Activated naive CD4-positive, alpha-beta T cell treated with anti-CD3 and anti-CD28 coated beads for 36 hours (primary cell): ENCODE measurements at regions of chr2 and their contacts with region 1.

Region 1: DNA sequence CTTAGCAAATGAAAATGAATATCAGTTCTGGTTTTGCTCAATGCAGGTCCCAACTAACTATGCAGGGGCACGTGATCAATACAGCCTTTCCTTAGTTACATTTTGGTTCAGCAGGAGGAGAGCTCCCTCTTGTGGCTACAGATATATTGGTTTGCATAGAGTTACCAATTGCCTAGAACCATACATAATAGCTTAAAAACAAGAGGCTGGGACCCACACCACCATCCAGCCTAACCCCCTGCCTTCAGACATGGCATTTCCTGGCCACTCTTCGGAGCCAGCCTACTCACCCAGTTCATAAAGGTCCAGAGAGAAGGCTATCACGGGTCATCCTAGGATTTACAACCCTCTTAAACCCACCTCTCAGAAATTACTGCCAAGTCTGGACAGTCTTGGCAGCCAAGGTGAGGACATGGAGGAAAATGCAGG is 10.5 kb downstream of the CCDC93 start:
- DNase-seq: peak; percentile 69
- H3K4me3 Mint-ChIP-seq: no peak overlapping the region
- H3K27ac Mint-ChIP-seq: no peak overlapping the region
- H3K4me1 Mint-ChIP-seq: peaks cover 22% of the 10 kb centered on the region
- H3K27me3 Mint-ChIP-seq: no peaks in the 10 kb centered on the region

Region 2: DNA sequence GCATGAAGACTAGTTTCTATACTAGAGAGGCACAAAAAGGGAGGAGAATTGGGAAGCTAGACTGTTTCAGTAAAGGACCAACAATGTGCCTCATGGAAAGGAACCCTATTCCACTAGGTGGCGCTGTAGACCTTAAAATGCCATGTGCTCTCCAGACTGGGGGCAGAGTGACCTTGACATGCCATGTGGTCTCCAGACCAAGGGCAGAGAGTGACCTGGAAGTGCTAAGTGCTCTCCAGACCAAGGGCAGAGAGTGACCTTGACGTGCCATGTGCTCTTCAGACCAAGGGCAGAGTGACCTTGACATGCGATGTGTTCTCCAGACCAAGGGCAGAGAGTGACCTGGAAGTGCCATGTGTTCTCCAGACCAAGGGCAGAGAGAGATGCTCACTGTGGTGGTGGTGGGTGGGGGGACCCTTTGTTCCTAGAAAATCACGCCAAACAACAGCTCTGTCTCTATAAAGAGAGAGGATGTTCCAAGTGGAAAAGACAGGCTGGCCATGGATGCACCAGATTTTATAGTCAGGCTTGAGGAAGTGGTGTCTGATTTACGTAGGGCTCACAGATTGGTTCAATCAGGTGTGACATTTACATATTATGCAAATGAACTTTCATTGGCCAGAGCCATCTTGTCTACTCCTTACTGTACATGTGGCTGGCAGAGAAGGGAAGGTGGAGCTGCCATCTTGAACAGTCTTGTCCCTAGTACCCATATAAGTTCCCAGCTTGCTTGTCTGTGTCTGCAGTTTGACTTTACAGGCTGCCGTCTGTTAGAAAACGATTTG is 532.9 kb before region 1 on chr2:
- CTCF ChIA-PET with region 1: no interaction called
- intact Hi-C with region 1: loop called (anchors 1 kb)
- DNase-seq: peak; percentile 26
- H3K4me3 Mint-ChIP-seq: no peak overlapping the region
- H3K27ac Mint-ChIP-seq: no peak overlapping the region
- H3K4me1 Mint-ChIP-seq: no peaks in the 10 kb centered on the region
- H3K27me3 Mint-ChIP-seq: no peaks in the 10 kb centered on the region

Region 3: GRCh38 chr2:117835990-117836760 is 167.2 kb before region 1 on chr2:
- CTCF ChIA-PET with region 1: interaction called, 30 read pairs
- intact Hi-C with region 1: loop called (anchors 1 kb)
- DNase-seq: peak; percentile 73
- H3K4me3 Mint-ChIP-seq: peak overlapping the region; percentile 67
- H3K27ac Mint-ChIP-seq: no peak overlapping the region
- H3K4me1 Mint-ChIP-seq: peaks cover 12% of the 10 kb centered on the region
- H3K27me3 Mint-ChIP-seq: no peaks in the 10 kb centered on the region

Region 4: GRCh38 chr2:117958186-117958585 is 45.2 kb before region 1 on chr2:
- CTCF ChIA-PET with region 1: interaction called, 17 read pairs
- intact Hi-C with region 1: loop called (anchors 5 kb)
- DNase-seq: no peak
- H3K4me3 Mint-ChIP-seq: no peak overlapping the region
- H3K27ac Mint-ChIP-seq: no peak overlapping the region
- H3K4me1 Mint-ChIP-seq: no peaks in the 10 kb centered on the region
- H3K27me3 Mint-ChIP-seq: no peaks in the 10 kb centered on the region

Region 5: GRCh38 chr2:117968722-117969121 is 34.7 kb before region 1 on chr2:
- CTCF ChIA-PET with region 1: interaction called, 13 read pairs
- intact Hi-C with region 1: no loop called
- DNase-seq: no peak
- H3K4me3 Mint-ChIP-seq: no peak overlapping the region
- H3K27ac Mint-ChIP-seq: no peak overlapping the region
- H3K4me1 Mint-ChIP-seq: no peaks in the 10 kb centered on the region
- H3K27me3 Mint-ChIP-seq: no peaks in the 10 kb centered on the region

Region 6: GRCh38 chr2:117985092-117985491 is 18.3 kb before region 1 on chr2:
- CTCF ChIA-PET with region 1: interaction called, 58 read pairs
- intact Hi-C with region 1: no loop called
- DNase-seq: no peak
- H3K4me3 Mint-ChIP-seq: no peak overlapping the region
- H3K27ac Mint-ChIP-seq: no peak overlapping the region
- H3K4me1 Mint-ChIP-seq: peaks cover 2% of the 10 kb centered on the region
- H3K27me3 Mint-ChIP-seq: no peaks in the 10 kb centered on the region

Region 7: DNA sequence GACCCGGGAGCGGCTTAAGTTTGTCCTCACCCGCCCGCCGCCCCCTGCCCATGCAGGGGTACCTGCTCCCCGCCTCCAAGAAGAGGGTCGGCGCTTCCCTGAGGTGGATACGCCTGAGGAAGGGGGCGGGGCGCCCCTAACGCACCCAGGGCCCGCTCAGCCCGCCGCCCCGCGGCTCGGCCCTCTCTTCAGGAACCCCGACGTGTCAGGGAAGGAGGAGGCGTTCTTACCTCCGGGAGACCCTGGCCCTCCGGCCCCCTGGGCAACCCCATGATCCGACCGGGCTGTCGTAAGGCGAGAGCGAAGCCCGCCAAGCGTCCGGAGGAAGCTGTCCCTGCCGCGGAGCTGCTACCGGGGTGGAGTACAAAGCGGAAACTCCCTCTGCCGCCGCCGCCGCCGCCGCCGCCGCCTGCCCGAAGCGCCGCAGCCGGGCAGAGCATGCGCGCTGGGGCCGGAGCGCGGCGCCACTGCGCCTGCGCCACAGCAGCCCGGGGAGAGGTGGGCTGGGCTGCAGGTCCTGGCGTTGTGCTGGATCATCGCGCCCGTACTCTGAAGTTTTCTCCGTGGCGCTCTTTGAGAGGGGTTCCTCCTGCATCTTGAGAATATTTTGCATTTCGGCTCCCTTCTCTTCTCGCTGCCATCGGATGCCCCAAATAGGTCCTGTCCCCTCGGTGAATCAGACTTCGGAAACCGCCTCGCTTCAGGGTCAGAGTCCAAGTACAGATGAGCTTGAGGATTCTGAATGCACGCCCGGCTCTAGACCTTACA is 10.5 kb after region 1 on chr2 and contains the start of gene CCDC93:
- CTCF ChIA-PET with region 1: interaction called, 31 read pairs
- intact Hi-C with region 1: loop called (anchors 1 kb)
- DNase-seq: peak; percentile 85
- H3K4me3 Mint-ChIP-seq: peak within 1 kb of the TSS; percentile 95
- H3K27ac Mint-ChIP-seq: peak within 1 kb of the TSS; percentile 83
- H3K4me1 Mint-ChIP-seq: peaks cover 38% of the 10 kb centered on the region
- H3K27me3 Mint-ChIP-seq: no peaks in the 10 kb centered on the region
- total RNA-seq, gene CCDC93: 29.0 to 32.8 TPM